Left cardiac atrium (tissue), 4 donors: ENCODE measurements at regions of chr19 and their contacts with region 1.

Region 1: GRCh38 chr19:13597640-13598039 is 91.4 kb upstream of the CACNA1A start:
- DNase-seq: no peak
- ATAC-seq: peak; percentile 82 to 84

Region 2: GRCh38 chr19:13718733-13719132 is 121.1 kb after region 1 on chr19:
- intact Hi-C with region 1: loop called (anchors 1 to 2 kb)
- DNase-seq: peak; percentile 46
- ATAC-seq: peak; percentile 79 to 90